CD8-positive, alpha-beta T cell (primary cell): ENCODE measurements at regions of chr10 and their contacts with region 1.

Region 1: GRCh38 chr10:79347226-79347893 is at the start of gene PPIF:
- DNase-seq: peak; percentile 76 to 97 (median 92)
- ATAC-seq: peak; percentile 90
- H3K4me3 ChIP-seq: peak within 1 kb of the TSS; percentile 76 to 93
- H3K4me3 Mint-ChIP-seq: peak within 1 kb of the TSS; percentile 78
- H3K27ac ChIP-seq: peak within 1 kb of the TSS; percentile 60 to 74
- H3K27ac Mint-ChIP-seq: peak within 1 kb of the TSS; percentile 87
- H3K4me1 ChIP-seq: peaks cover 27% of the 10 kb centered on the region
- H3K4me1 Mint-ChIP-seq: peaks cover 22% of the 10 kb centered on the region
- H3K27me3 ChIP-seq: no peaks in the 10 kb centered on the region
- H3K27me3 Mint-ChIP-seq: no peaks in the 10 kb centered on the region
- CTCF ChIP-seq: peak; percentile 86
- total RNA-seq, gene PPIF: 33.7 to 36.4 TPM

Region 2: DNA sequence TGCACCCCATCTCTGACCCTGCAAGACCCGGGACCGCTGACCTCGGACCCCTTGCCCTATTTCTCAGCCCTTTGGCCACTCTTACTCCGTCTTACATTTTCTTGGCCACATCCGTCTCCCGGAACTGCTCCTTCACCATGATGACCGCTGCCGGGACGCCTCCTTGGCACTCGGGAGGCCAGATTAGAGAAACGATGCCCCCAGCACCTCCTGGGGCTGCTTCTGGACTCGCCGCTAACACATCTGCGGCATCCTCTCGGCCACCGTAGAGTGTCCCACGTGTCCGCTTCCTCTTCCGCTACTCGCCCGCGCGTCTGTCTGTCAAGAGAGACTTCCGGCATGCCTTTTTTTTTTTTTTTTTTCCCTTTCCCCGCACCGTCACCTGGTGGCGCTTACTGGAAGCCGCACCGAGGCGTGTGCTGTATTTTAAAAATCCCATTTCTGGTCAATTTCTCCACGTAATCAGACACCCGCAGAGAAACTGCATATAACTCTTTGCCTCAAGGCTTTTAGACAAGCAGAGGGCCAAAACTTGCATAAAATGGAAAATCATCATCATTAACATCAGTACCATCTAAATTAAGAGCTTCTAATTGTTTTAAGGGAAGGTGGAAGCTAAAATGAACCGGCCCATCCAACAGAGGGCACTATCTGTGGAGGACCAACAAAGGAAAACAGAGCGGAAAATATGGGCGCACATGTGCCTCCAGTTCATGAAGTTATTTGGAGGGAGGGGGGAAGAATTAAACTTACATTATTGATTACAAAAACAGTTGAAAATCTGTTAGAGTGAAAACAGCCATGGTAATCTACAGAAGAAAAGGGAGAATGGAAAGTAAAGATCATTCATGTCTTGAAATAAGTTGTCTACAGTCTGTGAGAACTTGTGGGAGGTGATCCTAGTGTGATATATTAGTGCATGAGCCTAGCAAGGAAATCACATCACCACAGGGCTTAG is 1317.8 kb before region 1 on chr10 and contains the start of gene POLR3A:
- CTCF ChIA-PET with region 1: no interaction called
- POLR2A ChIA-PET with region 1: no interaction called
- intact Hi-C with region 1: loop called (anchors 2 to 10 kb)
- DNase-seq: peak; percentile 81 to 97 (median 90)
- ATAC-seq: peak; percentile 56
- H3K4me3 ChIP-seq: peak within 1 kb of the TSS; percentile 92 to 99
- H3K4me3 Mint-ChIP-seq: peak within 1 kb of the TSS; percentile 99
- H3K27ac ChIP-seq: peak within 1 kb of the TSS; percentile 55 to 70
- H3K27ac Mint-ChIP-seq: peak within 1 kb of the TSS; percentile 95
- H3K4me1 ChIP-seq: peaks cover 17% of the 10 kb centered on the region
- H3K4me1 Mint-ChIP-seq: peaks cover 40% of the 10 kb centered on the region
- H3K27me3 ChIP-seq: no peaks in the 10 kb centered on the region
- H3K27me3 Mint-ChIP-seq: no peaks in the 10 kb centered on the region
- CTCF ChIP-seq: peak; percentile 75
- total RNA-seq, gene POLR3A: 5.9 to 7.0 TPM

Region 3: DNA sequence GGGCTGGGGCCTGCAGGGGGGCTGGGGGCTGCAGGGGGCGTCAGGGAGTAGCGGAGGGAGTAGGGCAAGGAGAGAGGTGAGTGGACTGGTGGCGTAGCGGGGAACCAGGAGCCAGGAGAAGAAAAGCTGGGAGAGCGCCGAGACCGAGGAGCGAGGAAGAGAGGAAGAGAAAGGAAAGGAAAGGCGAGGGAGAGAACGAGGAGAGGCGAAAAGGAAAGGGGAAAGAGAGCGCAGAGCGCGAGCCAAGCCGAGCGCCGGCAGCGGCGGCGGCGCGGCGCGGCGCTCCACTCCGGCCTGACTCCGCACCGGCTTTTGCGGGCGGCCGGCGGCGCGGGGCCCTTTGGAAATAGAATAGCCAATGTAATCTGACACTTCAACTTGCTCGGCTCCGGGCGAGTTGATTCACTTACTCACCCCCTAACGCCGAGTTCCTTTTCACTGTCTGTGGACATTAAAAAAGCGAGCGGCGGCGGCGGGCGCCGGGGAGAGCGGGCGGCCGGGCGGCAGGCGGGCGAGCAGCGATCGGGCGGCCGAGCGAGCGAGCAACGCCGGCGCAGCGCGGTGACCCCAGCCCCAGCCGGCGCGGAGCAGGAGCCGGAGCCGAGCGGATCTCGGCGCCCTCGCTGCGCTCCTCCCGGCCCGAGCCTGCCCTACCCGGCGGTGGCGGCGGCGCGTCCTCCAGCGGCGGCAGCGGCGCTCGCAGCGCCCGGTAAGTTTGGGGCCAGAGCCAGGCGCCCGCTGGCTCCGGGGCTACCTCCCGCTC is 278.6 kb before region 1 on chr10 and contains the start of gene ZMIZ1:
- CTCF ChIA-PET with region 1: no interaction called
- POLR2A ChIA-PET with region 1: no interaction called
- intact Hi-C with region 1: loop called (anchors 5 to 10 kb)
- DNase-seq: peak; percentile 61 to 87 (median 80)
- ATAC-seq: peak; percentile 60
- H3K4me3 ChIP-seq: peak within 1 kb of the TSS; percentile 83 to 94
- H3K4me3 Mint-ChIP-seq: peak within 1 kb of the TSS; percentile 94
- H3K27ac ChIP-seq: peak within 1 kb of the TSS; percentile 36 to 44
- H3K27ac Mint-ChIP-seq: peak within 1 kb of the TSS; percentile 85
- H3K4me1 ChIP-seq: peaks cover 36% of the 10 kb centered on the region
- H3K4me1 Mint-ChIP-seq: peaks cover 48% of the 10 kb centered on the region
- H3K27me3 ChIP-seq: no peaks in the 10 kb centered on the region
- H3K27me3 Mint-ChIP-seq: no peaks in the 10 kb centered on the region
- CTCF ChIP-seq: no peak
- total RNA-seq, gene ZMIZ1: 10.1 to 10.8 TPM

Region 4: DNA sequence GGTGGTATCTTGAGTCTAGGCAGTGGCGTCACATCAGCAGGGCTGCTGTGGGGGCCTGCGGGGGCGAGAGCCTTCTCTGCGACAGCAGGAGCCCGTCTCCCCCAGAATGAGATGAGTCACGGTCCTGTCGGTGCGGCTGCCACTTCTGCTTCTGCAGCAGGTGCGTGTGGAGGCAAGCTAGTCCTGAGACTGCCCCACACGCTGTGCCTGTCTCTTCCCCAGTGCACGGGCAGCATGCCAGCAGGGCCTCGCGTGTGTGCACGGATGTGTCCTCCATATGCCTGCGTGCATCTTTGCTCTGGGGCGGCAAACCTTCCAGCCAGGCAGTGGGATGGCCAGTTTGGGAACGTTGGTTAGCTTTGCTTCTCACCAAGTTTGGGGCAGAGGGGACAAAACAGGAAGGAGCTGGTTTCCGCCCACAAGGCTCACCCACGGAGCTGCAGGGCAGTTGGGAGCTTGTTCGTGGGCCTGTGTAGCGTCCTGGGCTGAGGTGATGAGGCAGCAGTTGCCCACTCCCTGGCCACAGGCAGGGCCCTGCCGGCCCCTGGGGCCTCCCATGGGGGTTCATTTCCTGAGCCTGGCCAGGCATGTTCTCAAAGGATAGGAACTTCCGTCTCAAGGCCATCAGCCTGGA is 60.9 kb before region 1 on chr10:
- CTCF ChIA-PET with region 1: interaction called, 4 read pairs
- POLR2A ChIA-PET with region 1: interaction called, 4 read pairs
- intact Hi-C with region 1: loop called in 1 of 2 experiments (anchors 1 kb)
- DNase-seq: peak; percentile 53 to 94 (median 86)
- ATAC-seq: peak; percentile 94
- H3K4me3 ChIP-seq: peak overlapping the region; percentile 16 to 23
- H3K4me3 Mint-ChIP-seq: peak overlapping the region; percentile 72
- H3K27ac ChIP-seq: peak overlapping the region; percentile 16 to 81
- H3K27ac Mint-ChIP-seq: peak overlapping the region; percentile 94
- H3K4me1 ChIP-seq: peaks cover 36% of the 10 kb centered on the region
- H3K4me1 Mint-ChIP-seq: peaks cover 36% of the 10 kb centered on the region
- H3K27me3 ChIP-seq: no peaks in the 10 kb centered on the region
- H3K27me3 Mint-ChIP-seq: no peaks in the 10 kb centered on the region
- CTCF ChIP-seq: no peak

Region 5: DNA sequence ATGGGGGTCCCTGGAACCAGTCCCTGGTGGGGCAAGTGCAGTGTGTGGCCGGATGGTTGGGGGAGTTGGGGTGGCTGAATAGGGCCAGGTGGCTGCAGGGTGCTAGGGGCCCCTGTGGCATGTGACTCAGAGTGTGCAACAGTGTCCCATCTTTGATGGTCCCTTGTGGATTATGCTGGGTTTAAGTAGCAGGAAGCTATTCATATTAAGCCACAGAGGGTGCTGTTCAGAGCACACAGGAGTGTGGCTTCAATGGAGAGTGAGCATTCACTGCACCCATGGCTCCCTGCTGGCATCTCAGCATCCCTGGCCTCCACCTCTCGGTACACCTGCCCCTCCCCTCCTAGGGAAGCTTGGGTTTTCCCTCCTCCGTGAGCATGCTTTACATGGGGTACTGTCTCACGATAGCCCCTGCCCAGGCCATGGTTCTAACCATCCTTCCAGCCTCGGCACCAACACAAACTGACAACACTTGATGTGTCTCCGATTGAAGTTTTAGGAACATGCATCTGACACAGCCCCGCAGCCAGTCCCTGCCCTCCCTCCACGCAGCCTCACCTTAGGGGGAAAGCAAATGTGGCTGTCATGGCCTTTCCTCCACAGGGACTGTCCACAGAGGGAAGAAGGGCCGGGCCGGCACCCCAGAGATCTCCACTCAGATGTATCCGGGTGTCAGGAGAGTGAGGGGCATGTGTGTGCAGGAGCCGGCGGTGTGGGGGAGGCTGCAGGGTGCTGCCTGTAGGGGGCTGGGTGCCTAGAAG is 30.5 kb before region 1 on chr10:
- CTCF ChIA-PET with region 1: interaction called, 39 read pairs
- POLR2A ChIA-PET with region 1: interaction called, 20 read pairs
- intact Hi-C with region 1: loop called in 1 of 2 experiments (anchors 1 kb)
- DNase-seq: peak in 3 of 9 experiments; percentile 33 to 58 (median 55)
- ATAC-seq: peak; percentile 37
- H3K4me3 ChIP-seq: peak overlapping the region; percentile 1 to 20
- H3K4me3 Mint-ChIP-seq: peak overlapping the region; percentile 58
- H3K27ac ChIP-seq: no peak overlapping the region
- H3K27ac Mint-ChIP-seq: peak overlapping the region; percentile 64
- H3K4me1 ChIP-seq: peaks cover 57% of the 10 kb centered on the region
- H3K4me1 Mint-ChIP-seq: peaks cover 58% of the 10 kb centered on the region
- H3K27me3 ChIP-seq: no peaks in the 10 kb centered on the region
- H3K27me3 Mint-ChIP-seq: no peaks in the 10 kb centered on the region
- CTCF ChIP-seq: no peak

Region 6: DNA sequence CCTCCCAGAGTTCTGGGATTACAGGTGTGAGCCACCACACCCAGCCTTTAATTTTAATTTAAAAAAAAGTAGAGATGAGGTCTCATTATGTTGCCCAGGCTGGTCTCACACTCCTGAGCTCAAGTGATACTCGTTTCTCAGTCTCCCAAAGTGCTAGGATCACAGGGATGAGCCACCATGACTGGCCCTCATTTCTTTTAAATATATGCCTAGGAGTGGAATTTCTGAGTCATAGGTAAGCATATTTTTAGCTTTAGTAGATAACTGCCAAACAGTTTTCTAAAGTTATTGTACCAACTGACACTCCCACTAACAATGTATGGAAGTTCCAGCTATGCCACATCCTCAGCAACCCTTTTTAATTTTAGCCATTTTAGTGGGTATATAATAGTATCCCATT is 13.9 kb before region 1 on chr10:
- CTCF ChIA-PET with region 1: interaction called, 27 read pairs
- POLR2A ChIA-PET with region 1: no interaction called
- intact Hi-C with region 1: no loop called
- DNase-seq: no peak
- ATAC-seq: no peak
- H3K4me3 ChIP-seq: no peak overlapping the region
- H3K4me3 Mint-ChIP-seq: no peak overlapping the region
- H3K27ac ChIP-seq: no peak overlapping the region
- H3K27ac Mint-ChIP-seq: no peak overlapping the region
- H3K4me1 ChIP-seq: peaks cover 4% of the 10 kb centered on the region
- H3K4me1 Mint-ChIP-seq: peaks cover 7% of the 10 kb centered on the region
- H3K27me3 ChIP-seq: no peaks in the 10 kb centered on the region
- H3K27me3 Mint-ChIP-seq: no peaks in the 10 kb centered on the region
- CTCF ChIP-seq: no peak

Region 7: GRCh38 chr10:79463578-79464496 is 116.5 kb after region 1 on chr10:
- CTCF ChIA-PET with region 1: interaction called, 5 read pairs
- POLR2A ChIA-PET with region 1: no interaction called
- intact Hi-C with region 1: loop called in 1 of 2 experiments (anchors 1 kb)
- DNase-seq: peak in 1 of 9 experiments; percentile 44
- ATAC-seq: no peak
- H3K4me3 ChIP-seq: no peak overlapping the region
- H3K4me3 Mint-ChIP-seq: no peak overlapping the region
- H3K27ac ChIP-seq: no peak overlapping the region
- H3K27ac Mint-ChIP-seq: no peak overlapping the region
- H3K4me1 ChIP-seq: no peaks in the 10 kb centered on the region
- H3K4me1 Mint-ChIP-seq: no peaks in the 10 kb centered on the region
- H3K27me3 ChIP-seq: no peaks in the 10 kb centered on the region
- H3K27me3 Mint-ChIP-seq: peaks cover 2% of the 10 kb centered on the region
- CTCF ChIP-seq: no peak

Region 8: DNA sequence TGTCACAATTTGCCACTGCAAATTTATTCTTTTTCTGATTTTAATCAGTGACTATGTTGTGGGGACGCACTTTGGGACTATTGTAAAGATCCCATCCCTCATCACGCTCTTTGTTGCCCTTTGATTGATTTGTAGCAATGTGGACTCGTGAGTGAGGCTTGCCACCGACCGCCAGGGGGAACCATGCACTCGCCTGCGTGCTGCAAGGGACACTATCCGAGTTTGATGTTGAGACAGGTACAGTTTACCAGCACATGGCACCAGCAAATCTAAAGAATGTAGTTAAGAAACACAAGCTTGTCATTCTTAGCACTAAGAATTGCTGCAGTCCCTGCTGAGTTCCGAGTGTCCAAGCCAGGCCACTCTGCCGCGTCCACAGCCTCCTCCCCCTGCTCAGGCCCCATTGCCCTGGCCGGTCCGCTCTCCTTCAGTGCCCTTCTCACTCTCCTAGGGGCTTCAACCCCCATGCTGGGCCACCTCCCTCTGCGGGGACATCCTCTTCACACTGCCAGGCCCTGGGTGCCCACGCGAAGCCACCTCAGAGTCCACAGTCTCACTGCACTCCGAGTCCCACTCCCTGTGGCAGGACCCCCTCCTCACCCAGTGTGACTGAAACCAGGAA is 214.9 kb after region 1 on chr10:
- CTCF ChIA-PET with region 1: no interaction called
- POLR2A ChIA-PET with region 1: no interaction called
- intact Hi-C with region 1: no loop called
- DNase-seq: peak; percentile 18 to 73 (median 51)
- ATAC-seq: peak; percentile 51
- H3K4me3 ChIP-seq: no peak overlapping the region
- H3K4me3 Mint-ChIP-seq: no peak overlapping the region
- H3K27ac ChIP-seq: no peak overlapping the region
- H3K27ac Mint-ChIP-seq: no peak overlapping the region
- H3K4me1 ChIP-seq: no peaks in the 10 kb centered on the region
- H3K4me1 Mint-ChIP-seq: peaks cover 2% of the 10 kb centered on the region
- H3K27me3 ChIP-seq: peaks cover 0 to 2% of the 10 kb centered on the region in 2 experiments
- H3K27me3 Mint-ChIP-seq: peaks cover 28% of the 10 kb centered on the region
- CTCF ChIP-seq: peak; percentile 60